ENCODE measurements at regions of chrX and their contacts with region 1.

Region 1: GRCh38 chrX:20442597-20442996 is 175.9 kb upstream of the RPS6KA3 start:
- DNase-seq: peak; percentile 91
- H3K4me3 Mint-ChIP-seq: no peak overlapping the region
- H3K27ac Mint-ChIP-seq: no peak overlapping the region
- H3K4me1 Mint-ChIP-seq: peaks cover 45% of the 10 kb centered on the region
- H3K27me3 Mint-ChIP-seq: no peaks in the 10 kb centered on the region

Region 2: GRCh38 chrX:19904778-19905367 is 537.7 kb before region 1 on chrX:
- CTCF ChIA-PET with region 1: no interaction called
- intact Hi-C with region 1: loop called (anchors 2 kb)
- DNase-seq: peak; percentile 30
- H3K4me3 Mint-ChIP-seq: no peak overlapping the region
- H3K27ac Mint-ChIP-seq: no peak overlapping the region
- H3K4me1 Mint-ChIP-seq: peaks cover 9% of the 10 kb centered on the region
- H3K27me3 Mint-ChIP-seq: no peaks in the 10 kb centered on the region

Region 3: DNA sequence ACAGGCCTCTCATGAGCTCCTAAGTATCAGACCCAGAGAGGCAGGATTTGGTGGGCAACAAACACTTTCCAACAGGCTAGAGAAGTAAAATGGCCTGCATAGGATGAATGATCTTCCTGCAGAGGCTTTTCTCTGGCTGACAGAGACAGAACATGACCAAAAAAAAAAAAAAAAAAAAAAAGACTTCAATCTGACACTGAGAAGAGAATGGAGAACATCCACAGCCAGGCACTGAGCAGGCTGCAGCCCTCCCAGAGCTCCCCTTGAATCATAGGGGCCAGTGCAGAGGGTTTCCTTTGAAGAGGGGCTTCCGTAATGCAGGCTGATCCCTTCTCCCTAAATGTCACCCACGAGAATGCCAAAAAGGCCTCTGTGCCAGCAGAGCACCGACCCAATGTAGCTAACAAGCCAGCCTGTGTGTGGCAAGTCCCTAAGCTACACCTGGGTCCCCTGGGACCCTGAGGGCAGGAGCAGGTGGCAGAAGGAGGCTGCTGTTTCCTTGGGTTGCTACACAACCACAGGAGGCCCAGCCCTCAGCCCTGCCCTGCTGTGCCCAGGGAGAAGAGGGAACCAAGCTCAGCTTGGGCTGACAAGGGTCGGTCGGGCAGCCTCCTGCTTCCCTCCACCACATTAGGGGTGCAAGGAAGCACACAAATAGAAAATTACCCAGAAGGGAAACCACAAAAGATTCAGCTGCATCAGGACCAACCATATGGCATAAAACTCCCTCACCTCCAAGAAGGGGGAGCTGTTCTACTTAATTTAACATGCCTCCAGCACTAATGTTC is 381.4 kb before region 1 on chrX:
- CTCF ChIA-PET with region 1: no interaction called
- intact Hi-C with region 1: loop called (anchors 5 kb)
- DNase-seq: no peak
- H3K4me3 Mint-ChIP-seq: no peak overlapping the region
- H3K27ac Mint-ChIP-seq: no peak overlapping the region
- H3K4me1 Mint-ChIP-seq: peaks cover 4% of the 10 kb centered on the region
- H3K27me3 Mint-ChIP-seq: no peaks in the 10 kb centered on the region

Region 4: DNA sequence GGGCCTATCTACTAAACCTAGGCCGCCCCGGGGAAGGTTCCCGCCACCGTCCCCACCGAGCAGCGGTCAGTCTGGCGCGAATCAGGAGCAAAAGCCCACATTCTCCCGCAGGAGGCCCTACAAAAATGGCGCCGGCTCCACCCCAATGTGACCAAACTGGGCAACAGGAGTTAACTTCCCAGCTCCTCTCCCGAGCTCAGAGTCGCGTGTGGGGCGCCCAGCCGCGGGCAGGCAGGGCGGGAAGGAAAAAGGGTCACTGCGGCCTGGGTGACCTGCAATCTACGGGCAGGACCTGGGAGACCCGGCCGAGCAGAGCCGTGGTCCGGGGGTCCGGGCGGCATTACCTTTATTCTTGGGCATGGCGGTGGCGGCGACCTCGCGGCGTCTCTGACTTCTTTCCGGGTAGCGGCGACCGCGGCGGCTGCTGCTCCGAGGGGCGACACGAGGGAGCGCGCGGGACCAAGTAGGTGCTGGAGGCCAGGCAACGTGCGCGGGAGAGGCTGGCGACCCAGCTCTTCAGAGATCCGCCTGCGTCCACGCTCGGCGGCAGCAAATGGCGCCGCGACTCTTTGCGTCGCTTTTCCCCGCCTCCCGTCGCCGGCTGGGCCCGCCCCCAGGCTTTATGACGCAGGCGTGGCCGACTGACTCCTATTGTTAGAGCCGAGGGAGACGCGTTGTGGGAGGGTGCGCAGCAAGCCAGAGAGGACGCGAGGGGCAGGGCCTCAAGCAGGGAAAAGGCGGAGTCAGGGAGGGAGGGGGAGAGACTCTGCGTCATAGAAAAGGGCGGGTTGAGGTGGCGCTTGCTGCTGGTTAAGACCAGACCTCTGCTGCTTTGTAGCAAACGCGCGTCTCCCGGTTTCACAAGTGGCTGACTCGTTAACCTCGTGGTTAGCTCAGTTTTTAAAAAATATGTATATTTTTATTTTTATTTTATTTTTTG is 301.0 kb before region 1 on chrX and contains the start of gene EIF1AX:
- CTCF ChIA-PET with region 1: no interaction called
- intact Hi-C with region 1: loop called (anchors 2 kb)
- DNase-seq: peak; percentile 97
- H3K4me3 Mint-ChIP-seq: peak within 1 kb of the TSS; percentile 81
- H3K27ac Mint-ChIP-seq: peak within 1 kb of the TSS; percentile 80
- H3K4me1 Mint-ChIP-seq: peaks cover 38% of the 10 kb centered on the region
- H3K27me3 Mint-ChIP-seq: no peaks in the 10 kb centered on the region
- total RNA-seq, gene EIF1AX: 106 to 109 TPM

Region 5: DNA sequence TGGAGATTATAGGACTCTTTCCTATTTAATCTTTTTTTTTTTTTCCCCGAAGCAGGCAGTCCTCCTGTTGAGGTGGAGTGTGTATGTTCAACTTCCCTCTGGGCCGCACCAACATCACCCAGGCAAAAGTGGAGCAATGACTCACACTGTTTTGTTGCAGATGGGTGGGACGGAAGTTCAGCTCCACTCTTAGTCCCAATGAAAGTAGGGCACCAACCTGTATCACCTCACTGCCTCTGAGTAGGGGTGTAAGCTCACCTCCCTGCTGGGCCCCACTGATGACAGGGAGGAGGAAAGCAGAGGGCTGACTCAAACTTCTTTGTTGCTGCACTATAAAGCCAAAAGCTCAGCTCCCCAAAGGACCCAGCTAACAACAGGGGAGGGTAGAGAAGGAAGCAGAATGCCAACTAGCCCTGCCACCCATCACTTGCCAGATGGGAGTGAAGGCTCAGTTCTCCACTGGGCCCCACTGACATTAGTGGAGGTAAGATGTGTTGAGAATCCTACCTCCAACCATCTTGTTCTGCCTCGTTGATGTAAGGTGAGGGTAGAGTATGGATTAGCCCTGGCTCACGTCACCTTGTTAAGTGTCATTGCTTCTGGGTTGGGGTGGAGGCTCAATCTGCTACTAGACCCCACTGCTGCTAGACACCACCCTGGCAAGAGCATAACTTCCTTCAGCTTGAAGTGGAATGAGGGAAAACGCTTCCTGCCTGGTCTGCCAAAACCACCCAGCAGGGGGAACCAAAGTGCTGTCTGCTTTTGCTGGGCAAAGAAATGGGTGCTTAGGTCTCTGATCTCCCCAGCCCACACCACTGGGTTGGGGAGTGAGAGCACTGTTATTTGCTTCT is 190.0 kb before region 1 on chrX:
- CTCF ChIA-PET with region 1: interaction called, 8 read pairs
- intact Hi-C with region 1: loop called (anchors 1 kb)
- DNase-seq: peak; percentile 75
- H3K4me3 Mint-ChIP-seq: no peak overlapping the region
- H3K27ac Mint-ChIP-seq: peak overlapping the region; percentile 46
- H3K4me1 Mint-ChIP-seq: peaks cover 39% of the 10 kb centered on the region
- H3K27me3 Mint-ChIP-seq: no peaks in the 10 kb centered on the region

Region 6: DNA sequence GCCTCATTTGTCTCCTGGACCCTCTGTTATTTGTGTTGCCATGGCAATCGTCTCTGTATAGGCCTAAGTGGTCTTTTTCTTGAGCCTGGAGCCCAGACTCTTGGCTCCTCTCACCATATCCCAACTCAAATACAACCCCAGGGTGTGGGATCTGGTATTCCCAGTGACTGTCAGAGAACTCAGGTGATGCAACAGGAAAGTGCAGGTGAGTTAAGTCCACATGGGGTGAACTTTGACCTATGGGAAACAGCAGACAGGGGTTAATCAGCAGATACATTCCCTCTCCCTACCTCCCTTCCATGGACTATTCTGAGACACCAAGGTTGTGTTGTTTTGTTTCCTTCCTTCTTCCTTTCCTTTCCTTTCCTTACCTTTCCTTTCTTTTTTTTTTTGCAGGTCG is 45.0 kb before region 1 on chrX:
- CTCF ChIA-PET with region 1: no interaction called
- intact Hi-C with region 1: loop called (anchors 5 kb)
- DNase-seq: no peak
- H3K4me3 Mint-ChIP-seq: no peak overlapping the region
- H3K27ac Mint-ChIP-seq: no peak overlapping the region
- H3K4me1 Mint-ChIP-seq: peaks cover 15% of the 10 kb centered on the region
- H3K27me3 Mint-ChIP-seq: no peaks in the 10 kb centered on the region

Measured in activated naive CD4-positive, alpha-beta T cell treated with anti-CD3 and anti-CD28 coated beads for 36 hours (primary cell).